ENCODE measurements at regions of chr16 and their contacts with region 1.

Region 1: DNA sequence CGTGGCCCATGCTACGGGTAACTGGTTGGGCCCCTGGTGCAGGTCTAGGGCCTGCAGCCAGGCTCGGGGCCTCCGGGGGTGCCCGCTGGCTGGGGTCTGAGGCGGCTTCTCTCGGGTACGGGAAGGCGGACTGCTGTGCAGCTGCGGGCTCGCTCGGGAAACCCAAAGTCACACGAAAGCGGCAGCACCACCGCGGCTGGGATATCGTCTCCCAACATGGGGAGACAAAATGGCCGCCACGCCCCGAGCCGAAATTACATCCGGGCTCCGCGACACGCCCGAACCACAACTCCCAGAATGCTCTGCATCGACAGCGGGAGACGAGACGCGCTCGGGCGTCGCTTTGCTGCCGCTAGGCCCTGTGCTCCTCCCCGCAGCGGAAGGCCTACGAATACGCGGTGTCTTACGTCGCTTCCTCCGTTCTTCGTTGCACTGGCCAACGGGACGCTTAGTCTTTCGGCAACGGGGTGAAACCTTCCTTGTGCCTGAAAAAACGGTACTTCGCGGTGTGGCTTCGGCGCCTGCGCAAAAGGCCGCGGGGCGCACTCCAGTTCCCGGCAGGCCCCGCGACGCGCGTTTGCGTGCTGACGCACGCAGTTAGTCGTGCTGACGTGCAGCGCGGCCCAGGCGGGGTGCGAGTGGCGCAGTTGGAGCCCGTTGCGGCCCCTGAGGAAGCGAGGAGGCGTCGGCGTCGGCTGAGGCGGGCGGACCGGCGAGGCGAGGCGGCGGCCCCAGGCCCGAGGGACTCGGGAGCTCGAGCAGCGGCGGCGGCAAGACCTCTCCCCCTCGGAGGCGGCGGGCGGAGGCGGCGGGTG is at the start of gene SRRM2:
- DNase-seq: peak; percentile 92 to 98 (median 96)
- ATAC-seq: peak; percentile 92
- H3K4me3 ChIP-seq: peak within 1 kb of the TSS; percentile 68
- H3K4me3 Mint-ChIP-seq: peak within 1 kb of the TSS; percentile 89 to 98 (median 94)
- H3K27ac ChIP-seq: peak within 1 kb of the TSS; percentile 100
- H3K27ac Mint-ChIP-seq: peak within 1 kb of the TSS; percentile 96 to 100 (median 99)
- H3K4me1 ChIP-seq: peaks cover 35 to 40% of the 10 kb centered on the region in 2 donors
- H3K4me1 Mint-ChIP-seq: peaks cover 37 to 57% (median 50%) of the 10 kb centered on the region in 7 donors
- H3K27me3 ChIP-seq: no peaks in the 10 kb centered on the region
- H3K27me3 Mint-ChIP-seq: no peaks in the 10 kb centered on the region
- total RNA-seq, gene SRRM2: 590 to 1,259 (median 1,020) TPM

Region 2: DNA sequence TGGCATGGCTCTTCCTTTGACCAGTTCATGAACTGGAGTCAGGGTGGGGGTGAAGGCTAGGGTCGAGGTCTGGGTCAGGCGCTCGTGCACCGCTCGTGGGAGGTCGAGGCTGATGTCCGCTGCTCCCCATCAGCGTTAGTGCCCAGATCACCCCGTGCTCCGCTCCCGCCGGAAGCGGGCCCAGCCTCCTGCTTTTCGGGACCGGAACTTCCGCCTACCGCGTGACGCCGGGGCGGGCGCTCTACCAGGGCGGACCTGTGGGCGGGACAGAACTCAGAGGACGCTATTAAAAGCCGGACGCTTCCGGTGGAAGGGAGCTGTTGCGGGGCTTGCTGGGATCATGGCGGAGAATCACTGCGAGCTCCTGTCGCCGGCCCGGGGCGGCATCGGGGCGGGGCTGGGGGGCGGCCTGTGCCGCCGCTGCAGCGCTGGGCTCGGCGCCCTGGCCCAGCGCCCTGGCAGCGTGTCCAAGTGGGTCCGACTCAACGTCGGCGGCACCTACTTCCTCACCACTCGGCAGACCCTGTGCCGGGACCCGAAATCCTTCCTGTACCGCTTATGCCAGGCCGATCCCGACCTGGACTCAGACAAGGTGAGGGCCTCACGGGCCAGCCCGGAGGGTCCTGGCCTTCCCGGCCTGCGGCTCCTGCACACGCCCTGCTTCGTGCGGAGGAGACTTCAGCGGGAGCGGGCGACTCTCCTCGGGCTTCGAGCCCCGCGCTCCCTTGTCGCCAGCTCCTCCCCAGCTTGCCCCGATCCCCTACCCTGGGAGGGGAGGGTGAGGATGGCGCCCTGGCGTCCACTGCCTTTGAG is 69.8 kb before region 1 on chr16 and contains the start of gene KCTD5:
- CTCF ChIA-PET with region 1: no interaction called
- POLR2A ChIA-PET with region 1: interaction called, 3 read pairs
- intact Hi-C with region 1: loop called (anchors 1 to 2 kb)
- DNase-seq: peak; percentile 89 to 98 (median 94)
- ATAC-seq: peak; percentile 97
- H3K4me3 ChIP-seq: peak within 1 kb of the TSS; percentile 81
- H3K4me3 Mint-ChIP-seq: peak within 1 kb of the TSS; percentile 89 to 99 (median 94)
- H3K27ac ChIP-seq: peak within 1 kb of the TSS; percentile 92
- H3K27ac Mint-ChIP-seq: peak within 1 kb of the TSS; percentile 82 to 99 (median 94)
- H3K4me1 ChIP-seq: peaks cover 8 to 18% of the 10 kb centered on the region in 2 donors
- H3K4me1 Mint-ChIP-seq: peaks cover 12 to 29% (median 25%) of the 10 kb centered on the region in 7 donors
- H3K27me3 ChIP-seq: no peaks in the 10 kb centered on the region
- H3K27me3 Mint-ChIP-seq: no peaks in the 10 kb centered on the region
- total RNA-seq, gene KCTD5: 21.4 to 37.5 (median 24.6) TPM

Region 3: GRCh38 chr16:2769675-2770056 is 17.4 kb after region 1 on chr16:
- CTCF ChIA-PET with region 1: no interaction called
- POLR2A ChIA-PET with region 1: interaction called, 50 read pairs
- intact Hi-C with region 1: loop called in 1 of 2 experiments (anchors 1 kb)
- DNase-seq: no peak
- ATAC-seq: no peak
- H3K4me3 ChIP-seq: no peak overlapping the region
- H3K4me3 Mint-ChIP-seq: peak overlapping the region in 1 of 10 donors; percentile 61
- H3K27ac ChIP-seq: no peak overlapping the region
- H3K27ac Mint-ChIP-seq: peak overlapping the region in 6 of 9 donors; percentile 16 to 71 (median 33)
- H3K4me1 ChIP-seq: no peaks in the 10 kb centered on the region
- H3K4me1 Mint-ChIP-seq: peaks cover 4 to 35% (median 16%) of the 10 kb centered on the region in 7 donors
- H3K27me3 ChIP-seq: no peaks in the 10 kb centered on the region
- H3K27me3 Mint-ChIP-seq: no peaks in the 10 kb centered on the region

Region 4: GRCh38 chr16:2883027-2883851 is 131.0 kb after region 1 on chr16 and contains the start of gene FLYWCH2:
- CTCF ChIA-PET with region 1: no interaction called
- POLR2A ChIA-PET with region 1: no interaction called
- intact Hi-C with region 1: loop called in 1 of 2 experiments (anchors 1 kb)
- DNase-seq: peak; percentile 98 to 100 (median 100)
- ATAC-seq: peak; percentile 89
- H3K4me3 ChIP-seq: peak within 1 kb of the TSS; percentile 69
- H3K4me3 Mint-ChIP-seq: peak within 1 kb of the TSS; percentile 90 to 97 (median 94)
- H3K27ac ChIP-seq: peak within 1 kb of the TSS; percentile 84
- H3K27ac Mint-ChIP-seq: peak within 1 kb of the TSS; percentile 93 to 99 (median 97)
- H3K4me1 ChIP-seq: peaks cover 6% of the 10 kb centered on the region in 2 donors
- H3K4me1 Mint-ChIP-seq: peaks cover 0 to 18% (median 13%) of the 10 kb centered on the region in 7 donors
- H3K27me3 ChIP-seq: no peaks in the 10 kb centered on the region
- H3K27me3 Mint-ChIP-seq: no peaks in the 10 kb centered on the region
- total RNA-seq, gene FLYWCH2: 13.6 to 30.4 (median 24.0) TPM

Region 5: DNA sequence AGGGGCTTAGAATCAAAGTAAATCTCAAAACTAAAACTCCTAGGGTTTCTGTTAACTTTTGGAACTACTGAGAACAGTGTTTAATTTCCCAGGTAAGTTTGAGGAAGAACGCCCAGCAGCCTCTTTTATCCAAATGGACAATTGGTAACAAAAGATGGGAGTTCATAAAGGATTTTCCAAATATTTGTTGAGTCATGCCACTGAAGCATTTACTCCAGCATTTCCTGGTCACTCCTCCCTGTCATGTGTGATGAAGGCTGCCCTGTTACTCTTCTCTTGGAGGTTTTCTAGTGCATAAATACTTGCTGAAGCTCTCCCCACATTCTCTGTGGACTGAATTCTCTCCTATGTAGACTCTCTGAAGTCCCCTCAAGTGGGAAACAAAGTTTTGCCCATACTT is 569.6 kb after region 1 on chr16:
- CTCF ChIA-PET with region 1: no interaction called
- POLR2A ChIA-PET with region 1: no interaction called
- intact Hi-C with region 1: no loop called
- DNase-seq: no peak
- ATAC-seq: no peak
- H3K4me3 ChIP-seq: no peak overlapping the region
- H3K4me3 Mint-ChIP-seq: no peak overlapping the region
- H3K27ac ChIP-seq: no peak overlapping the region
- H3K27ac Mint-ChIP-seq: no peak overlapping the region
- H3K4me1 ChIP-seq: no peaks in the 10 kb centered on the region
- H3K4me1 Mint-ChIP-seq: no peaks in the 10 kb centered on the region
- H3K27me3 ChIP-seq: no peaks in the 10 kb centered on the region
- H3K27me3 Mint-ChIP-seq: no peaks in the 10 kb centered on the region

Measured in naive thymus-derived CD4-positive, alpha-beta T cell (primary cell).